Activated naive CD4-positive, alpha-beta T cell treated with anti-CD3 and anti-CD28 coated beads for 36 hours (primary cell): ENCODE measurements at regions of chr12 and their contacts with region 1.

Region 1: GRCh38 chr12:98998697-98999299 is 353.7 kb downstream of the APAF1 start:
- DNase-seq: no peak
- H3K4me3 Mint-ChIP-seq: no peak overlapping the region
- H3K27ac Mint-ChIP-seq: no peak overlapping the region
- H3K4me1 Mint-ChIP-seq: no peaks in the 10 kb centered on the region
- H3K27me3 Mint-ChIP-seq: no peaks in the 10 kb centered on the region

Region 2: GRCh38 chr12:98490501-98491453 is 508.0 kb before region 1 on chr12:
- CTCF ChIA-PET with region 1: no interaction called
- intact Hi-C with region 1: loop called (anchors 1 kb)
- DNase-seq: peak; percentile 91
- H3K4me3 Mint-ChIP-seq: peak overlapping the region; percentile 59
- H3K27ac Mint-ChIP-seq: peak overlapping the region; percentile 87
- H3K4me1 Mint-ChIP-seq: peaks cover 4% of the 10 kb centered on the region
- H3K27me3 Mint-ChIP-seq: no peaks in the 10 kb centered on the region

Region 3: DNA sequence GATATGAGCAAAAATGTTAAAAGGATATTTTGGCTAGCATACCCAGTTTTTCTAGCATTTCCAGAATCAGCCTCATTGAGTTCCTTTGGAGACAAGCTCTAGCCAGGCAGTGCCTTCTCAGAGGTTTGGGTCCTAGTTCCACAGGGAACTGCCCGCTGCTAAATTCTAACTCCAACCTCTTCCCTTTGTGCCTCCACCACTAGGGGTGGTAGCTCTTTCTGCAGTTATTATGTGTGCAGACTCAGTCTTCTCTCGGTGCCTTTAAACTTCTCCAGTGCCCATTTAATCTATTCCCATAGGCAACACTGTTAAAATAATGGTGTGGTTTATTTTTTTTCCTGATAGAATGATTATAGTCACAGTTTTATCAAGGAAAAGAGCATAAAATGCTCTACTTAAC is 426.8 kb before region 1 on chr12:
- CTCF ChIA-PET with region 1: interaction called, 15 read pairs
- intact Hi-C with region 1: loop called (anchors 1 kb)
- DNase-seq: no peak
- H3K4me3 Mint-ChIP-seq: no peak overlapping the region
- H3K27ac Mint-ChIP-seq: no peak overlapping the region
- H3K4me1 Mint-ChIP-seq: no peaks in the 10 kb centered on the region
- H3K27me3 Mint-ChIP-seq: peaks cover 2% of the 10 kb centered on the region

Region 4: DNA sequence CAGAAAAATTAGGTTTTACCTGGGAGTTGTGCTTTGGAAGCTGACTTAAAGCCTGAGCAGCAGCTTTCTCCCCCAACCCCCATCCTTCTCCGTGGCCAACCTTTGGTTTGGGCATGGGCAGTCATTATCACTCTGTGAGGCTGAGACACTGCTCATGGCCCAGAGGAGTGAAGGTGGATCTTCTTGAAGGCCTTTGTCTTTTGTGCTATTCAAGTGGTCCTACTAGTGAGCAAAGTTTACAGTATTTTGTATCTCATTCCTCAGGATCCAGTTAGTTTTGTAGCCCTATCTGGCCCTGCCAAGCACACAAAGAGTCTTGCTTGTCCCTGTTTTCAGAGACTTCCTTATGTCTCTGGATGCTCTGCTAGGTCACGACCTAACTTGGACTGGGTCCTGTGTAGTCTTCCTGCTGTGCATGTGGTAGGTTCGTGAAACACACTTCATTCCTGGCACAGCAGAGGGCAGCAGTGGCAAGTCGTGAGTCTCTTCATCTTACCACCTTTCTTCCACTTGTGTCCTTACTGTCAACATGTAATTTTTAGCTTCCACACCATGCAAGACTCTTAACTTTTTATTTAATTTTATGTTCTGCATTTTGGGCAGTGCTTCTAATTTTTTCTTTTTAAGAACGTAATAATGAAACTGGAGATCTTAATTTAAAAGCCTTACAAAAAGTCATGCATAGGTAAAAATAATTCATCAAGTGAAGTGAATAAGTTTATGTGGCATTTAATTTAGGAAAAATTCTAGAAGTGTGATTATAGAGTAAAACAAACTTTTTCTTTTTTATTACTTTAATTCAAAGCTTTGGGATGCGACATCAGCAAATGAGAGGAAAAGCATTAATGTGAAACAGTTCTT is 300.0 kb before region 1 on chr12:
- CTCF ChIA-PET with region 1: interaction called, 7 read pairs
- intact Hi-C with region 1: loop called (anchors 1 kb)
- DNase-seq: peak; percentile 68
- H3K4me3 Mint-ChIP-seq: no peak overlapping the region
- H3K27ac Mint-ChIP-seq: peak overlapping the region; percentile 13
- H3K4me1 Mint-ChIP-seq: peaks cover 5% of the 10 kb centered on the region
- H3K27me3 Mint-ChIP-seq: no peaks in the 10 kb centered on the region

Region 5: GRCh38 chr12:98725476-98726247 is 273.1 kb before region 1 on chr12:
- CTCF ChIA-PET with region 1: interaction called, 15 read pairs
- intact Hi-C with region 1: loop called (anchors 1 kb)
- DNase-seq: peak; percentile 77
- H3K4me3 Mint-ChIP-seq: no peak overlapping the region
- H3K27ac Mint-ChIP-seq: no peak overlapping the region
- H3K4me1 Mint-ChIP-seq: no peaks in the 10 kb centered on the region
- H3K27me3 Mint-ChIP-seq: no peaks in the 10 kb centered on the region

Region 6: DNA sequence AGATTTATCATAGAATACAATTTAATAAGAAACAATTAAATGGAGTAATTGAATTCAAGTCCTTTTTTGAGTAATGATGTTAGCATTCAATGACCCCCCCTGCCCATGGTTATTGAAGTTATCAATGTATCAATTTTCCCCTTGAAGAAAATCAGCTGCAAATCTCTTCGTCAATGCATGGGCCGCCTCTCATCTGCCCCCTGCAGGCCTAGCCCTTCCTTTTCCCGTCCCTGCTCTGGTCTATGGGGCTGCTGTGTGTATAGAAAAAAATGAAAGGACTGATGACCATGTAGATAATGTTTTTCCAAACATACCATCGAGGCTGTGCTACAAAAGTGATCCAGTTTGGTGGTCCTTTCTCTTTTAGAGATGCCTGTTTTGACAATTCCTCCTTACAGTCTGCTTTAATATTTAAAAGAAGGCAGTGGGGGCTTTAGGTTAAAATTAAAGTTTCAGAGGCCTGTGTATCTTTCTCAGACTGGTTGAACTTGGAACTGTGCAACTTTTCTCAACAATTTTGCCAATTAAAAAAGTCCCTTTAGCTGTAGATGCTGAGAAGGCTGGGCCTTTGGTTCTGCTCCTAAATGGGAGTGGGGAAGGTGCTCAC is 255.3 kb before region 1 on chr12:
- CTCF ChIA-PET with region 1: interaction called, 5 read pairs
- intact Hi-C with region 1: loop called (anchors 5 kb)
- DNase-seq: peak; percentile 60
- H3K4me3 Mint-ChIP-seq: no peak overlapping the region
- H3K27ac Mint-ChIP-seq: no peak overlapping the region
- H3K4me1 Mint-ChIP-seq: peaks cover 21% of the 10 kb centered on the region
- H3K27me3 Mint-ChIP-seq: peaks cover 22% of the 10 kb centered on the region